ENCODE measurements at regions of chr2 and their contacts with region 1.

Region 1: GRCh38 chr2:223093436-223094241 is 41.6 kb downstream of the KCNE4 start:
- ATAC-seq: peak in 6 of 8 experiments; percentile 65 to 99 (median 82)
- H3K4me3 ChIP-seq: no peak overlapping the region
- H3K27ac ChIP-seq: no peak overlapping the region
- H3K4me1 ChIP-seq: peaks cover 9 to 18% of the 10 kb centered on the region in 2 donors

Region 2: GRCh38 chr2:222976521-222977076 is 117.0 kb before region 1 on chr2:
- in situ Hi-C with region 1: loop called in 1 of 9 experiments (anchors 10 kb)
- ATAC-seq: peak in 3 of 8 experiments; percentile 39 to 52 (median 47)
- H3K4me3 ChIP-seq: no peak overlapping the region
- H3K27ac ChIP-seq: no peak overlapping the region
- H3K4me1 ChIP-seq: peaks cover under 1 to 10% of the 10 kb centered on the region in 2 donors

Measured in motor neuron (in vitro differentiated cells).